ENCODE measurements at regions of chr13 and their contacts with region 1.

Region 1: GRCh38 chr13:40922437-40923040 is 96.6 kb downstream of the ELF1 start:
- DNase-seq: no peak
- ATAC-seq: no peak
- H3K4me3 ChIP-seq: no peak overlapping the region
- H3K4me3 Mint-ChIP-seq: peak overlapping the region; percentile 94
- H3K27ac ChIP-seq: no peak overlapping the region
- H3K27ac Mint-ChIP-seq: peak overlapping the region; percentile 67
- H3K4me1 ChIP-seq: peaks cover 9 to 16% of the 10 kb centered on the region in 2 donors
- H3K4me1 Mint-ChIP-seq: peaks cover 21% of the 10 kb centered on the region
- H3K27me3 ChIP-seq: no peaks in the 10 kb centered on the region
- H3K27me3 Mint-ChIP-seq: no peaks in the 10 kb centered on the region
- CTCF ChIP-seq: no peak

Region 2: DNA sequence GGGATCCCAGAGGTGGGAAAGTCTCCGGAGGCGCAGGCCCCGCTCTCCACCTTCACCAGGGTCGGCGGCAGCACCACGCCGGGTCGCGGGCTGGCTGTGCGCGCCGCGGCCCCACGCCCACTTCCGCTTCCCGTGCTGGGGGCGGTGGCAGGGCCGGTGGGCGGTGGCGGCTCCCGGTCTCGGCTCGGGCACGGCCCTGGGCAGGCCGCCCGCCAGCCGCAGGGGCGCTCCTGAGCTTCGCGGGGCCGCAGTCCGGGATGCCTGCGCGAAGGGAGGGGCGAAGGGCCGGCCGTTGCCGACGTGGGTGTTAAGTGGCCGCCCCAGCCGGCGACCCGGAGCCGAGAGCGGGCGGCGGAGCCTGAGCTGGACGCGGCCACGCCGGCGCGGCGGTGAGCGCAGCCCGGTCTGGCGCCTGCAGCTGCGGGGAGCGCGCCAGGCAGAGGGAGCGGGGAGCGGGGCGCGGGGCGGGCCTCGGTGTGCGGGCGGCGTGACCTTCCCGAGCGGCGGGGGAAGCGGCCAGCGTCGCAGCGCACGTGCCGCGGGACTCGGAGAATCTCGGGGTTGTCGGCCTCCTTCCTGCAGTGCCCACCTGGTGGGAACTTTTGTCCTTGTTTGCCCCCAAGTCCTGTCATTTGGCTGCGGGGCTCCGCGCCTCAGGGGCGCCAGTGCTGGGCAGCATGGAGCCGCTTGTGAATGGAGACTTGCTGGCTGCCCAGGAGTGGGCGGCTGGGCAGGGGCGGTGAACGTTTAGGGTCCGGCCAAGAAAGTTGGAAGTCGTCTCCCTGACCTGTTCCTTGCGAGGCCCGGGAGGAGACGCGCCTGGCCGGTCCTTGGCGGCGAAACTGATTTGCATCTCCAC is 133.0 kb before region 1 on chr13 and contains the start of gene SLC25A15:
- CTCF ChIA-PET with region 1: interaction called, 11 read pairs
- POLR2A ChIA-PET with region 1: interaction called, 7 read pairs
- intact Hi-C with region 1: loop called (anchors 1 kb)
- DNase-seq: peak; percentile 82
- ATAC-seq: peak; percentile 95
- H3K4me3 ChIP-seq: peak within 1 kb of the TSS; percentile 21 to 73 (median 69)
- H3K4me3 Mint-ChIP-seq: peak within 1 kb of the TSS; percentile 84
- H3K27ac ChIP-seq: peak within 1 kb of the TSS; percentile 29 to 57
- H3K27ac Mint-ChIP-seq: peak within 1 kb of the TSS; percentile 81
- H3K4me1 ChIP-seq: peaks cover 9 to 13% of the 10 kb centered on the region in 2 donors
- H3K4me1 Mint-ChIP-seq: peaks cover 10% of the 10 kb centered on the region
- H3K27me3 ChIP-seq: no peaks in the 10 kb centered on the region
- H3K27me3 Mint-ChIP-seq: no peaks in the 10 kb centered on the region
- CTCF ChIP-seq: peak; percentile 19
- total RNA-seq, gene SLC25A15: 3.8 and 4.5 TPM in 2 replicates

Region 3: DNA sequence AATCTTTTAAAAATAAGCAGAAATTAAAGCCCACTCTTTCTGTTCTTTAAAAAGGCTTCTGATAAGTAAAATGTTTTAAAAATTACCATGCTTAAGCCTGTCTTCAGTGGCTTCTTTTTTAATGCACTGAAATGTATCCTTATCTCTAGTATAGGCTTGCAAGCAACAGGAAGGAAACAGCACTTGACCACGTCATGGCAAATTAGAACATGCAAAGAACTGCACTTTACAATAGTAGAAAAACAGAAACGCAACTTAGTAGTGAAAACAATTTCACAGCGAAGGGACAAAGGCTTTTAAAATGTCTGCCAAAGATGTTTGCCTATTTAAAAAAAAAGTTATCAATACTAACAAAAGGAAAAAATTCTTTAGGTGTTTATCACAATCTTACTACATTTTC is 60.2 kb after region 1 on chr13:
- CTCF ChIA-PET with region 1: no interaction called
- POLR2A ChIA-PET with region 1: no interaction called
- intact Hi-C with region 1: loop called (anchors 2 kb)
- DNase-seq: peak; percentile 87
- ATAC-seq: peak; percentile 69
- H3K4me3 ChIP-seq: peak overlapping the region; percentile 39 to 94 (median 62)
- H3K4me3 Mint-ChIP-seq: peak overlapping the region; percentile 91
- H3K27ac ChIP-seq: peak overlapping the region; percentile 94 to 97
- H3K27ac Mint-ChIP-seq: peak overlapping the region; percentile 95
- H3K4me1 ChIP-seq: peaks cover 55 to 67% of the 10 kb centered on the region in 2 donors
- H3K4me1 Mint-ChIP-seq: peaks cover 68% of the 10 kb centered on the region
- H3K27me3 ChIP-seq: no peaks in the 10 kb centered on the region
- H3K27me3 Mint-ChIP-seq: no peaks in the 10 kb centered on the region
- CTCF ChIP-seq: no peak

Region 4: GRCh38 chr13:41054212-41054877 is 131.8 kb after region 1 on chr13:
- CTCF ChIA-PET with region 1: interaction called, 10 read pairs
- POLR2A ChIA-PET with region 1: no interaction called
- intact Hi-C with region 1: no loop called
- DNase-seq: peak; percentile 72
- ATAC-seq: peak; percentile 34
- H3K4me3 ChIP-seq: peak overlapping the region in 1 of 5 experiments; percentile 38
- H3K4me3 Mint-ChIP-seq: peak overlapping the region; percentile 82
- H3K27ac ChIP-seq: peak overlapping the region in 1 of 2 donors; percentile 53
- H3K27ac Mint-ChIP-seq: peak overlapping the region; percentile 90
- H3K4me1 ChIP-seq: peaks cover 29 to 30% of the 10 kb centered on the region in 2 donors
- H3K4me1 Mint-ChIP-seq: peaks cover 64% of the 10 kb centered on the region
- H3K27me3 ChIP-seq: no peaks in the 10 kb centered on the region
- H3K27me3 Mint-ChIP-seq: no peaks in the 10 kb centered on the region
- CTCF ChIP-seq: peak; percentile 71

Region 5: GRCh38 chr13:41199526-41199925 is 277.0 kb after region 1 on chr13:
- CTCF ChIA-PET with region 1: no interaction called
- POLR2A ChIA-PET with region 1: no interaction called
- intact Hi-C with region 1: loop called (anchors 1 kb)
- DNase-seq: peak; percentile 88
- ATAC-seq: peak; percentile 89
- H3K4me3 ChIP-seq: peak overlapping the region in 2 of 5 experiments; percentile 5 to 47
- H3K4me3 Mint-ChIP-seq: peak overlapping the region; percentile 51
- H3K27ac ChIP-seq: peak overlapping the region; percentile 71 to 100
- H3K27ac Mint-ChIP-seq: peak overlapping the region; percentile 98
- H3K4me1 ChIP-seq: peaks cover 35% of the 10 kb centered on the region in 2 donors
- H3K4me1 Mint-ChIP-seq: peaks cover 42% of the 10 kb centered on the region
- H3K27me3 ChIP-seq: no peaks in the 10 kb centered on the region
- H3K27me3 Mint-ChIP-seq: no peaks in the 10 kb centered on the region
- CTCF ChIP-seq: no peak

Region 6: DNA sequence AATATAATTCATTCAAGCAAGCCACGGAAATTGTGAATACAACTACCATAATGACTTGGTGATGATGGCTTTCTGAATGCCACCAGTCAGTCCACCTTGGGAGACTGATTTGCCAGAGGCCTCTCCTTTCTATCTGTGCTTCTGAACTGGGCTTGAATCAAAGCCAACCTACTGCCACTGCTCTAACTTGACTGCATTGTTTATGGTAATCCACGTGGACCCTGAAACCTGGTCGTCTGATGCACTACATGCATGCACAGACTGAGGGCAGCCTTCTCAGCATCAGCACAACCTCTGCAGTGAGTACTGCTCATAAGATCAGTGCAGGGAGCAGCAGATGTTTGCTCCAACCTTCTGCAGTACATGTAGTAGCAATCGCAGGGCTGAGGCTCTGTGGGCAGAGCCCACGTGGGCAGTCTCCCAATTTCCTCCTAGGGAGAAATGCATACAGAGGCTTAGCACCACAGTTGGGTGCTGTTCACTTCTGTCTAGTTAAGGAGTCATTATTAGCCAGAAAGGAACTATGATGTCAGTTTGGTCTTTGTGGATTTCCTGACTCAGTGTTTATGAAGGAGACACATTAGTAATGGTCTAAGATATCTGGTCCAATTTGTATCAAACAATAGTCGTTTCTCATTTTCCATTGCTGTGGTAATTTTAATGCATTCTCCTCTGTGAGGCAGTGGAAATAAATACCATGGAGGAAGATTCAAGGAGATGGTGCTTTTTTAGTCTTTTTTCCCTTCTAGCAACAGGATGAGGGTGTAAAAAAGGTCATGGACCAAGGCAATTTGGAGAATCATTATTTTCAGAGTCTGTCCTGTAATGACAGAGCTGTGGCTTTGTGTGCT is 1431.9 kb after region 1 on chr13:
- CTCF ChIA-PET with region 1: no interaction called
- POLR2A ChIA-PET with region 1: no interaction called
- intact Hi-C with region 1: no loop called
- DNase-seq: peak; percentile 30
- ATAC-seq: peak; percentile 21
- H3K4me3 ChIP-seq: no peak overlapping the region
- H3K4me3 Mint-ChIP-seq: no peak overlapping the region
- H3K27ac ChIP-seq: no peak overlapping the region
- H3K27ac Mint-ChIP-seq: no peak overlapping the region
- H3K4me1 ChIP-seq: peaks cover 5 to 8% of the 10 kb centered on the region in 2 donors
- H3K4me1 Mint-ChIP-seq: peaks cover 6% of the 10 kb centered on the region
- H3K27me3 ChIP-seq: no peaks in the 10 kb centered on the region
- H3K27me3 Mint-ChIP-seq: no peaks in the 10 kb centered on the region
- CTCF ChIP-seq: no peak